ENCODE measurements at regions of chr3 and their contacts with region 1.

Region 1: GRCh38 chr3:137970914-137971831 is 38.8 kb upstream of the CLDN18 start:
- DNase-seq: peak; percentile 75
- H3K4me3 ChIP-seq: no peak overlapping the region
- H3K27ac ChIP-seq: no peak overlapping the region
- H3K4me1 ChIP-seq: no peaks in the 10 kb centered on the region
- H3K27me3 ChIP-seq: no peaks in the 10 kb centered on the region
- CTCF ChIP-seq: peak; percentile 90

Region 2: GRCh38 chr3:137032465-137033120 is 938.6 kb before region 1 on chr3:
- CTCF ChIA-PET with region 1: no interaction called
- POLR2A ChIA-PET with region 1: no interaction called
- intact Hi-C with region 1: loop called (anchors 10 kb)
- DNase-seq: peak; percentile 89
- H3K4me3 ChIP-seq: peak overlapping the region; percentile 42
- H3K27ac ChIP-seq: no peak overlapping the region
- H3K4me1 ChIP-seq: peaks cover 3% of the 10 kb centered on the region
- H3K27me3 ChIP-seq: no peaks in the 10 kb centered on the region
- CTCF ChIP-seq: peak; percentile 94